ENCODE measurements at regions of chr9 and their contacts with region 1.

Region 1: GRCh38 chr9:127396808-127397497 is at the start of gene SLC2A8:
- DNase-seq: peak; percentile 98 to 99 (median 99)
- ATAC-seq: peak; percentile 96 to 99 (median 98)
- H3K4me3 ChIP-seq: peak within 1 kb of the TSS; percentile 66 to 96 (median 82)
- H3K27ac ChIP-seq: peak within 1 kb of the TSS; percentile 54 to 96 (median 82)
- H3K4me1 ChIP-seq: peaks cover 0 to 26% (median 17%) of the 10 kb centered on the region in 12 donors
- H3K27me3 ChIP-seq: no peaks in the 10 kb centered on the region
- CTCF ChIP-seq: peak in 9 of 12 donors; percentile 11 to 37 (median 23)
- POLR2A ChIP-seq: peak; percentile 42 to 87
- total RNA-seq, gene SLC2A8: 12.1 to 25.0 (median 14.9) TPM

Region 2: DNA sequence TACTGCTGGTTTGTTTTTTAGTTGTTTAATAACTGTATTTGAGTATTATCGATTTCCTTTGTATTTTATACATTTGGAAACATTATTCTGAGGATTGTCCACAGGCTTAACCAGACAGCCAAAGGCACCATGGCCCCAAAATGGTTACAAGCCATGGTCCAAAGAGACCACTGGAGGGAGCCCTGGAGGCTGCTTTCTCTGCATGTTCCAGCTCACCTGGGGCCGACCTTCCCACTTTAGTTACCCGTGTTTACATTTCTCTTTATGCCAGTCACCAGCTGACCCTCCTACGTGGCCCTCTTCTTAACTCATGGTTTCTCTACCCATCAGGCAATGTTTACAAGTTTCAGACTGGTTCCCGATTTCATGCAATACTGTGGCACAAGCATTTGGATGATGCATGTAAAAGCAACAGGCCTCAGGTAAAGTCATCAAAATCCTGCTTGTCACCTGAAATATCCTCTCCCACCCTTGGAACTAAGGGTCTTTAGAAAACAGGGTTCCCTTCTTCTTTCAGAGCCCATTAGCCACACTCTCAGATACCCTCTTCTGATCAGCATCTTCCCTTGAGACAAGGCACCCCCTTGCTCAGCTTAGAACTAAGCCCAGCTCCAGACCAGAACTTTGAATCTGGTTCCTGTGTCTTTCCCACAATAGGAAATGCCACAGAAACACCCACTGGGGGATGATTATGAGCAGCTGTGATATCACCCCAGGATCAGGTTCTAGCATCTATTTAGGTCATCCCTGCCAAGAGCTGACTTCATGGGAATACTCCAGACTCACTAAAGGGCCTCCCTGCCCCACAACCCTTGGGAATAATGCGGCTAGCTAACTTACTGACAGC is 182.3 kb before region 1 on chr9:
- intact Hi-C with region 1: loop called in 1 of 10 experiments (anchors 5 kb)
- DNase-seq: peak in 1 of 5 donors; percentile 53
- ATAC-seq: peak in 3 of 4 donors; percentile 27 to 60 (median 59)
- H3K4me3 ChIP-seq: no peak overlapping the region
- H3K27ac ChIP-seq: no peak overlapping the region
- H3K4me1 ChIP-seq: peaks cover 0 to 8% (median 0%) of the 10 kb centered on the region in 12 donors
- H3K27me3 ChIP-seq: no peaks in the 10 kb centered on the region
- CTCF ChIP-seq: peak; percentile 58 to 82 (median 74)
- POLR2A ChIP-seq: no peak

Region 3: GRCh38 chr9:127224178-127224882 is 172.6 kb before region 1 on chr9:
- intact Hi-C with region 1: loop called in 6 of 10 experiments (anchors 2 to 10 kb)
- DNase-seq: peak; percentile 91 to 96 (median 95)
- ATAC-seq: peak; percentile 88 to 90 (median 88)
- H3K4me3 ChIP-seq: peak overlapping the region; percentile 38 to 96 (median 62)
- H3K27ac ChIP-seq: peak overlapping the region; percentile 66 to 88 (median 82)
- H3K4me1 ChIP-seq: peaks cover 0 to 25% (median 9%) of the 10 kb centered on the region in 12 donors
- H3K27me3 ChIP-seq: no peaks in the 10 kb centered on the region
- CTCF ChIP-seq: peak in 6 of 12 donors; percentile 20 to 38 (median 25)
- POLR2A ChIP-seq: peak in 1 of 2 donors; percentile 30

Region 4: GRCh38 chr9:127311239-127311741 is 85.7 kb before region 1 on chr9:
- intact Hi-C with region 1: loop called in 5 of 10 experiments (anchors 2 to 10 kb)
- DNase-seq: peak in 4 of 5 donors; percentile 25 to 45 (median 34)
- ATAC-seq: peak; percentile 25 to 57 (median 54)
- H3K4me3 ChIP-seq: peak overlapping the region in 1 of 12 donors; percentile 7
- H3K27ac ChIP-seq: peak overlapping the region; percentile 45 to 88 (median 72)
- H3K4me1 ChIP-seq: peaks cover 0 to 59% (median 31%) of the 10 kb centered on the region in 12 donors
- H3K27me3 ChIP-seq: no peaks in the 10 kb centered on the region
- CTCF ChIP-seq: peak; percentile 26 to 72 (median 58)
- POLR2A ChIP-seq: no peak

Region 5: DNA sequence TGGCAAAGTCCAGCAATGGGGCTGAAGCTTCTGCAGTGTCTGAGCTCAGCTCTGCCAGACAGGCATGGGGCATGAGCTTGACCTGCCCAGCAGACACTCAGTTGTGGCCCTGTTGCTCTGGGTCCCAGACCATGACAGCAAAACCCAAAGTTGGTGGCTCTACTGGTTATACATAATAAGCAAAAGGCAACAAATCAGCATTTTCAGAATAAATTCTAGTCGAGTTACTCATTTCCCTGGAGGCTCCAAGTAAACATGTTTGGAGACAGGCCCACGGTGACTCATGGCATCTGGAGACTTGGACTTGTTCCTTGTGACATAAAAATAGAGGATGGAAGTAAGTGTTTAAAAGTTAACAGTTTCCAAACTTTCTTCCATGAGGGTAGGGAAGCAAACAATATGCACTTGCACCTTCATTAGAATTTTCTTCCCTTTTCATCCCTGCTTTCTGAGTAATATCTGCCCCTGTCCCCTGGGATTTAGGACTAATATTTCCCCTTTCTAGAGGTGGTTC is 60.2 kb before region 1 on chr9:
- intact Hi-C with region 1: no loop called
- DNase-seq: peak; percentile 72 to 86 (median 85)
- ATAC-seq: peak; percentile 57 to 82 (median 68)
- H3K4me3 ChIP-seq: no peak overlapping the region
- H3K27ac ChIP-seq: peak overlapping the region in 11 of 12 donors; percentile 23 to 84 (median 74)
- H3K4me1 ChIP-seq: peaks cover 21 to 82% (median 68%) of the 10 kb centered on the region in 12 donors
- H3K27me3 ChIP-seq: no peaks in the 10 kb centered on the region
- CTCF ChIP-seq: no peak
- POLR2A ChIP-seq: no peak

Region 6: DNA sequence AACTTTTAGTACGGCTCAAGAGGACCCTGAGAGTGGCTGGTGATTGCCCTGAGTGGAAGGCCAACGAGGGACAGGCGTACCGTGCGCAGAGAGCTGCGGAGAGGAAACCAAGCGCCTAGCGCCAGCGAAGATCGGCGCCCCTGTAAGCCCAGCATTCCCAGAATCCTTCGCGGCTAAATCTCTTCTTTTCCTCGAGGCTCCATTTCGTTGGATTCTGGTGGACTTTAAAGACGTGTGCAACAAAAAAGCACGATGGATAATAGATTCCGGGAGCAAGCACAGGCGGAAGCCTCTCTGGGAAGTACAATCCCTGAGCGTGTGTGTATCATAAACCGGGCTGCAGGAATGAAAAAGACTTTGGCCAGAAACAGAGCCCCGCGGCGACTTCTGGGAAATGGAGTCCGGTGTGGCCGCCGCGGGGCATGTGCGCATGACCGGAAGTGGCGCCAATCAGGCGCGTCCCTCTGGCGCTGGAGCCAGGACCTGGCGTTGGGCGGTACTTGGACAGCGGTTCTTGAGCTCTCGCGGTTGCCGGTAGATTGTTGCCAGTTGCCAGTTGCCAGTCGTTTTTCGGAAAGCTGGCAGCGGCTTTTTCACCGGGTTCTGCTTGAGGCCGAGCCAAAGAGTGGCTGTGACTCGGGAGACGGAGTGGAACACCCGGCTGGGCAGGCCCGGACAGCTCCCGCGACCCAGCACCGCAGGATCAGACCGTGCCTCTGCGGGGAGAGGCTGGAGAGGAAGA is 27.2 kb after region 1 on chr9 and contains the start of gene ZNF79:
- intact Hi-C with region 1: loop called in 1 of 10 experiments (anchors 2 kb)
- DNase-seq: peak; percentile 94 to 96 (median 95)
- ATAC-seq: peak; percentile 97 to 99 (median 98)
- H3K4me3 ChIP-seq: peak within 1 kb of the TSS; percentile 57 to 97 (median 78)
- H3K27ac ChIP-seq: peak within 1 kb of the TSS; percentile 69 to 95 (median 92)
- H3K4me1 ChIP-seq: peaks cover 10 to 46% (median 27%) of the 10 kb centered on the region in 12 donors
- H3K27me3 ChIP-seq: no peaks in the 10 kb centered on the region
- CTCF ChIP-seq: no peak
- POLR2A ChIP-seq: peak in 1 of 2 donors; percentile 67
- total RNA-seq, gene ZNF79: 4.6 to 7.4 (median 5.8) TPM

Region 7: GRCh38 chr9:127450830-127451724 is 54.1 kb after region 1 on chr9 and contains the starts of genes LRSAM1 and RPL12:
- intact Hi-C with region 1: loop called in 1 of 10 experiments (anchors 2 kb)
- DNase-seq: peak; percentile 96 to 99 (median 97)
- ATAC-seq: peak; percentile 75 to 87 (median 78)
- H3K4me3 ChIP-seq: peak within 1 kb of the TSS; percentile 64 to 93 (median 89)
- H3K27ac ChIP-seq: peak within 1 kb of the TSS; percentile 90 to 98 (median 95)
- H3K4me1 ChIP-seq: peaks cover 7 to 58% (median 36%) of the 10 kb centered on the region in 12 donors
- H3K27me3 ChIP-seq: no peaks in the 10 kb centered on the region
- CTCF ChIP-seq: peak in 3 of 12 donors; percentile 11 to 27 (median 24)
- POLR2A ChIP-seq: peak; percentile 89 to 99
- total RNA-seq, gene LRSAM1: 21.9 to 42.2 (median 31.6) TPM
- total RNA-seq, gene RPL12: 408 to 937 (median 547) TPM

Measured in heart left ventricle (tissue), 16 donors.